Mammary epithelial cell (primary cell): ENCODE measurements at regions of chr16 and their contacts with region 1.

Region 1: GRCh38 chr16:83215406-83216001 is 588.7 kb downstream of the CDH13 start:
- DNase-seq: peak; percentile 24
- H3K4me3 ChIP-seq: no peak overlapping the region
- H3K27ac ChIP-seq: no peak overlapping the region
- H3K4me1 ChIP-seq: no peaks in the 10 kb centered on the region
- H3K27me3 ChIP-seq: no peaks in the 10 kb centered on the region
- CTCF ChIP-seq: peak; percentile 79 to 83

Region 2: DNA sequence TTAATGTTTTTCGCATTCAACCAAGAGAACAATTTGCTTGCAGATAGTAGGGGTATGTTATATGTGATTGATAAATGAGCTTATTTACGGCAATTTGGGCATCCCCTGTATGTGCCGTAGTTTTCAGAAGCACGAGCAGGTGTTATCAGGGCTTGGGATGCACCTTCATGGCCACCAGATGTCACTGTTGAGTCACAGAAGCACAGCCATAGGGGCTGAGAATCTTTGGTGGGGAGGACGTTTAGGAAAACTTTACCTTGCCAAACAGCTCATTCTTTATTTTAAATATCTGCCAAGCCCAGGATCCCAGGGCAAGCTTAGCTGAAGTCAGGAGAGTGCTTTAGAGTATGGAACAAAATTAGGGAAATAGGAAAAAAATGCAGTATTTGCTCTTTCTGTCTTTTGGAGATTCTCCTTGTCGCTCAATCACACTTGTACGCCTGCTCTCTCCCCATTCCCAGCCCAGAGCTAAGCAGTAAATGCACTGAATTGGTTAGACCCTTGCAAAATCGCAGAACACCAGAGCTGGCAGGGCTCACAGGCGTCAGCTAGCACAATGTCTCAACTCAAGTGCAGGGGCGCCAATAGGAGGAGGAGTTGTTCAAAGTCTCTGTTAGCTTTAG is 951.9 kb before region 1 on chr16:
- CTCF ChIA-PET with region 1: no interaction called
- dilution Hi-C with region 1: no loop called
- in situ Hi-C with region 1: no loop called
- intact Hi-C with region 1: loop called (anchors 1 kb)
- DNase-seq: peak; percentile 20
- H3K4me3 ChIP-seq: no peak overlapping the region
- H3K27ac ChIP-seq: no peak overlapping the region
- H3K4me1 ChIP-seq: no peaks in the 10 kb centered on the region
- H3K27me3 ChIP-seq: peaks cover 4% of the 10 kb centered on the region
- CTCF ChIP-seq: peak; percentile 90 to 97

Region 3: DNA sequence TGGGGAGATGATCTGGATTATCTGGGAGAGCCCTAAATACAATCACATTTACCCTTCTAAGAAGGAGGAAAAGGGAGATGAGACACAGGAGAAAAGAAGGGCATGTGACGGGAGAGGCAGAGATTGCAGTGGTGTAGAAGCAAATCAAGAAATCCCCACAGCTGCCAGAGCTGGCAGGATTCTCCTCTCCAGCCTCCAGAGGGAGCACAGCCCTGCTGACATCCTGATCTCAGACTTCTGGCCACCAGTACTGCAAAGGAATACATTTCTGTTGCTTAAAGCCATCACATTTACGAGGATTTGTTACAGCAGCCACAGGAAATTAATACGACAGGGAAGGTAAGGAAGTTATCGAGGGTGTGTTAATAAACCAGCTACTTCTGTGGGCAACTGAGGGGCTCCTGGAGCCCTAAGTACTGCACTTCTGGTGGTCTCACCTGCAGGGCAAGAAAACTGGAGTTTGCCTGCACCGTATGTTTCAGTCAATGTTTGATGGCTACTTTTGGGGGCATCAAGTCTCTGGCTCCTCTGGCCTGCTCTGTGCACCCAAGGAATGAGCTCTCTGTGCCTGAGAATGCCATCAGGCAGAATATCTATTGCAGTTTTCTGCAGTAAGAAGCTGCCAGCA is 611.6 kb before region 1 on chr16:
- CTCF ChIA-PET with region 1: no interaction called
- dilution Hi-C with region 1: no loop called
- in situ Hi-C with region 1: no loop called
- intact Hi-C with region 1: loop called (anchors 1 kb)
- DNase-seq: peak; percentile 62
- H3K4me3 ChIP-seq: no peak overlapping the region
- H3K27ac ChIP-seq: no peak overlapping the region
- H3K4me1 ChIP-seq: no peaks in the 10 kb centered on the region
- H3K27me3 ChIP-seq: no peaks in the 10 kb centered on the region
- CTCF ChIP-seq: peak; percentile 54 to 83

Region 4: DNA sequence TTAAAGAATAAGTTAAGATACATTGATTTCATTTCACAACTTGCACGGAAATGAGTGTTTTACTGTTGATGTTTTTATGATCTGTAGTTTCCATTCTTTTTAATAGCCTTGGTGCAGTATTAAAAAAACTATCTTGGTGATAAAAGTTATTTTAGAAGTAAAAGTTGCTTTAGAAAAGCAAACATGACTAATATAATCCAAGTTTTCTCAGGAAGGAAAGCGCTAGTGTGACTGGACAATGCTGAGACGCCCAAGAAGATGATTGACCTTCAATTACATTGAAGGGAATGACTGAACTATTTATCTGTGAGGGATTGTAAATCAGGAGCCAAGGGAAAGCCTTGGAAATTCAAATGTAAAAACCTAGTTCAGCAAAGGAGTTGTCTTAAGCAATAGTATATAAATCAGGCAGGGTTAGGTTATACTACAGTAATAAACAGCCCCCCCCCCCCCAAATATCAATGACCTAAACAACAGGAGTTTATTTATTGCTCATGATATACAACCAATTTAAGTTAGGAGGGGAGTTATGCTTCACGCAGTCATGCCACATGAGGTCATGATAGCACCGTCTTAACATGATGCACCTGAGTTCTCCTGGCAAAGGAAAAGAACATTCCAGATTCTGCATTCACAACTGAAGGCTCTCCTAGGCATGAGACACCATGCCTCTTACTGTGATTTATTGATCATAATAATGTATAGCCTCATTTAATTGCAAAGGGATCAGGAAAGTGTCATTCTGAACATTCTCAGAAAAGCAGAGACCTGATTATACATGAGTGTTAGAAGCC is 144.9 kb before region 1 on chr16:
- CTCF ChIA-PET with region 1: no interaction called
- dilution Hi-C with region 1: no loop called
- in situ Hi-C with region 1: no loop called
- intact Hi-C with region 1: loop called (anchors 10 kb)
- DNase-seq: no peak
- H3K4me3 ChIP-seq: no peak overlapping the region
- H3K27ac ChIP-seq: no peak overlapping the region
- H3K4me1 ChIP-seq: no peaks in the 10 kb centered on the region
- H3K27me3 ChIP-seq: no peaks in the 10 kb centered on the region
- CTCF ChIP-seq: no peak

Region 5: GRCh38 chr16:83449861-83450260 is 234.4 kb after region 1 on chr16:
- CTCF ChIA-PET with region 1: interaction called, 3 read pairs
- dilution Hi-C with region 1: no loop called
- in situ Hi-C with region 1: no loop called
- intact Hi-C with region 1: loop called (anchors 5 kb)
- DNase-seq: no peak
- H3K4me3 ChIP-seq: no peak overlapping the region
- H3K27ac ChIP-seq: no peak overlapping the region
- H3K4me1 ChIP-seq: no peaks in the 10 kb centered on the region
- H3K27me3 ChIP-seq: no peaks in the 10 kb centered on the region
- CTCF ChIP-seq: no peak